ENCODE measurements at regions of chr14 and their contacts with region 1.

Region 1: GRCh38 chr14:63543000-63543825 is at the start of gene PPP2R5E:
- DNase-seq: peak; percentile 96
- H3K4me3 ChIP-seq: peak within 1 kb of the TSS; percentile 89 to 93
- H3K27ac ChIP-seq: peak within 1 kb of the TSS; percentile 83 to 89
- H3K4me1 ChIP-seq: peaks cover 0 to 2% of the 10 kb centered on the region in 2 experiments; a peak in 1 of 4 replicates
- H3K27me3 ChIP-seq: no peaks in the 10 kb centered on the region
- CTCF ChIP-seq: no peak
- EP300 ChIP-seq: no peak
- RAD21 ChIP-seq: peak; percentile 8; the same call in 1 of the 2 replicates
- polyA plus RNA-seq, gene PPP2R5E: 4.0 and 4.4 TPM in 2 replicates

Region 2: GRCh38 chr14:63383776-63384367 is 159.3 kb before region 1 on chr14:
- CTCF ChIA-PET with region 1: interaction called, 78 read pairs
- POLR2A ChIA-PET with region 1: interaction called, 4 read pairs
- DNase-seq: no peak
- H3K4me3 ChIP-seq: no peak overlapping the region
- H3K27ac ChIP-seq: no peak overlapping the region
- H3K4me1 ChIP-seq: no peaks in the 10 kb centered on the region
- H3K27me3 ChIP-seq: no peaks in the 10 kb centered on the region
- CTCF ChIP-seq: no peak
- EP300 ChIP-seq: no peak
- RAD21 ChIP-seq: no peak

Region 3: DNA sequence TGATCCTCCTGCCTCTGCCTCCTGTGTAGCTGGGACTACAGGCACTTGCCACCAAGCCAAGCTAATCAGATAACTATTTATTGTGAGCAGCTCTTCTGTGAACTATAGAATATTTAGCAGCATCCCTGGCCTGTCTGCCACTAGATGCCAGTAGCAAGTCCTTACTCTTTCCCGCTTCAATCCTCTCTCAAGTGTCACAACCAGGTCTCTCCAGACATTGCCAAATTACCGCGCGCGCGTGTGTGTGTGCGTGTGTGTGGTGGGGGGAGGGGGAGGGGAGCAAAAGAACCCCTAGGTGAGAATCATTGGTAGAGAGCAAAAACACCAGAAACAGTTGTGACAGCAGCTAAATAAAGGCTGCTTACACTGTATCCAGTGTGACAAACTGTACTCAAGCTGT is 50.0 kb before region 1 on chr14:
- CTCF ChIA-PET with region 1: interaction called, 11 read pairs
- POLR2A ChIA-PET with region 1: interaction called, 3 read pairs
- DNase-seq: peak; percentile 55
- H3K4me3 ChIP-seq: no peak overlapping the region
- H3K27ac ChIP-seq: peak overlapping the region; percentile 51 to 92
- H3K4me1 ChIP-seq: peaks cover 6 to 19% of the 10 kb centered on the region in 2 experiments
- H3K27me3 ChIP-seq: no peaks in the 10 kb centered on the region
- CTCF ChIP-seq: peak; percentile 39
- EP300 ChIP-seq: no peak
- RAD21 ChIP-seq: peak; percentile 65

Region 4: DNA sequence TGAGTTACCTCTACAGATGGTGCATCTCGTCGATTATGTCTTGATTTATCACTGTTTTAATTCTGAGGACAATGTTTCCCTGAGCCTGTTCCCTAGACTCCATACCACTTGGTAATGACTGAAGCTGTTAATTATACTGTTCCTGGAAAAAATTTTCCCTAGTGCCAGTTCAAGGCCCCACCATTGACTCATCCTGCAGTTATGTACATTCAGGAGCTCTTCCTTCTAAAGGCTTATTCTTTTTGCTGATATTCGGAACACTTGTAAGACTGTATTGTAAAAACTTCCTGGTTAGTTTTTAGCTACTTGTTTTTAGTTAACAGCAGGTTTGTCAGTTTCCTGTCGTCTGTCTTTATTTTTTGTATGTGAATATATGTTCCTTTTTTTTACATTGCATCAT is 30.4 kb after region 1 on chr14:
- CTCF ChIA-PET with region 1: no interaction called
- POLR2A ChIA-PET with region 1: no interaction called
- DNase-seq: no peak
- H3K4me3 ChIP-seq: no peak overlapping the region
- H3K27ac ChIP-seq: no peak overlapping the region
- H3K4me1 ChIP-seq: no peaks in the 10 kb centered on the region
- H3K27me3 ChIP-seq: no peaks in the 10 kb centered on the region
- CTCF ChIP-seq: no peak
- EP300 ChIP-seq: no peak
- RAD21 ChIP-seq: no peak

Region 5: GRCh38 chr14:63641473-63642228 is 98.4 kb after region 1 on chr14 and contains the start of gene WDR89:
- CTCF ChIA-PET with region 1: interaction called, 5 read pairs
- POLR2A ChIA-PET with region 1: interaction called, 11 read pairs
- DNase-seq: peak; percentile 87
- H3K4me3 ChIP-seq: peak within 1 kb of the TSS; percentile 70 to 72
- H3K27ac ChIP-seq: peak within 1 kb of the TSS; percentile 93 to 94
- H3K4me1 ChIP-seq: no peaks in the 10 kb centered on the region; a peak in 2 of 4 replicates
- H3K27me3 ChIP-seq: no peaks in the 10 kb centered on the region
- CTCF ChIP-seq: peak; percentile 69
- EP300 ChIP-seq: no peak; a peak in 1 of 4 replicates
- RAD21 ChIP-seq: peak; percentile 49
- polyA plus RNA-seq, gene WDR89: 2.6 and 3.1 TPM in 2 replicates